Ovary (tissue), 10 donors: ENCODE measurements at regions of chr11 and their contacts with region 1.

Region 1: GRCh38 chr11:41446107-41446506 is 13.3 kb downstream of the LRRC4C start:
- DNase-seq: no peak
- H3K4me3 ChIP-seq: no peak overlapping the region
- H3K27ac ChIP-seq: no peak overlapping the region
- H3K4me1 ChIP-seq: no peaks in the 10 kb centered on the region
- H3K27me3 ChIP-seq: no peaks in the 10 kb centered on the region
- CTCF ChIP-seq: no peak
- EP300 ChIP-seq: no peak
- POLR2A ChIP-seq: no peak

Region 2: GRCh38 chr11:39630365-39630764 is 1815.7 kb before region 1 on chr11:
- intact Hi-C with region 1: loop called in 1 of 4 experiments (anchors 5 kb)
- DNase-seq: no peak
- H3K4me3 ChIP-seq: no peak overlapping the region
- H3K27ac ChIP-seq: no peak overlapping the region
- H3K4me1 ChIP-seq: no peaks in the 10 kb centered on the region
- H3K27me3 ChIP-seq: no peaks in the 10 kb centered on the region
- CTCF ChIP-seq: no peak
- EP300 ChIP-seq: no peak
- POLR2A ChIP-seq: no peak

Region 3: DNA sequence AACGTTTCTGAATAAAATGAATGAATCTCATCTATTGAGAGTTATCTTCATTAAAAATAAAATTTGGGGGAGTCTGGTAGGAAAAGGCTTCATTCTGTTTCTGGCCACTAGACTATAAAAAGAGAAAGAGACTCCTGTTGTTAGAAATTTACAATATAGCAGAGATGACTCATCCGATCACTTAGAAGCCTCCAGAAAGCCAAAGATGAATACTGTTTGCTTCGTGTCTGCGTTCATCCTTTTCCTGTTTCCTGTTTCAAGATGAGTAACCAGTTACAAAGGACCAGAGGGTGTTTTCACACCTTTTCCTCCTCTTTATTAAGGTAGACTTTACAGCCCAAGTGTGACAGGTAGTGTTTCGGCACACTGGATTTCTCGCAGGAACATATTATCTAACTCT is 1107.4 kb before region 1 on chr11:
- intact Hi-C with region 1: loop called in 1 of 4 experiments (anchors 5 kb)
- DNase-seq: no peak
- H3K4me3 ChIP-seq: no peak overlapping the region
- H3K27ac ChIP-seq: no peak overlapping the region
- H3K4me1 ChIP-seq: no peaks in the 10 kb centered on the region
- H3K27me3 ChIP-seq: no peaks in the 10 kb centered on the region
- CTCF ChIP-seq: no peak
- EP300 ChIP-seq: no peak
- POLR2A ChIP-seq: no peak

Region 4: DNA sequence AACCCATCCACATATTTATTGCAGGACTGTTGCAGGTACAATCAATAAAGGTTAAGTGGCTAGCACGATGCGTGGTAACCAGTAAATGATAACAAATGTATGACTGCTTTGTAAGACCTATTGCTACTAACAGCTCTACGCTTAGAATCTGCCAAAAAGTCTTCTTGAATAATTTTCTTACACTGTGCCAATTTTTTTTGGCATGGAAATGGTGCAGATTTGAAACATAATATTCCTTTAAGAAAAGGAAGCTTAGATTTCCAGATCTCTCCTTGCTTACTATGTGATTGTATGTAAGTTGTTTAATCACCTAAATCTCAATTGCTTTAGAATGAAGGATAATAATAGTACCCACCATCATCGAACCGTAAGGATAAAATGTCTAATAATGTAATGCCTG is 178.7 kb before region 1 on chr11:
- intact Hi-C with region 1: no loop called
- DNase-seq: no peak
- H3K4me3 ChIP-seq: no peak overlapping the region
- H3K27ac ChIP-seq: no peak overlapping the region
- H3K4me1 ChIP-seq: no peaks in the 10 kb centered on the region
- H3K27me3 ChIP-seq: no peaks in the 10 kb centered on the region
- CTCF ChIP-seq: no peak
- EP300 ChIP-seq: no peak
- POLR2A ChIP-seq: no peak